Caco-2 (cell line): ENCODE measurements at regions of chr12 and their contacts with region 1.

Region 1: GRCh38 chr12:119500209-119500608 is 93.4 kb upstream of the TMEM233 start:
- DNase-seq: no peak
- H3K4me3 ChIP-seq: no peak overlapping the region
- H3K4me3 Mint-ChIP-seq: no peak overlapping the region
- H3K27ac Mint-ChIP-seq: no peak overlapping the region
- H3K4me1 ChIP-seq: no peaks in the 10 kb centered on the region
- H3K4me1 Mint-ChIP-seq: no peaks in the 10 kb centered on the region
- H3K27me3 ChIP-seq: no peaks in the 10 kb centered on the region
- H3K27me3 Mint-ChIP-seq: peaks cover 18% of the 10 kb centered on the region
- CTCF ChIP-seq: no peak

Region 2: GRCh38 chr12:119415714-119416113 is 84.5 kb before region 1 on chr12:
- CTCF ChIA-PET with region 1: no interaction called
- POLR2A ChIA-PET with region 1: no interaction called
- intact Hi-C with region 1: no loop called
- DNase-seq: no peak
- H3K4me3 ChIP-seq: no peak overlapping the region
- H3K4me3 Mint-ChIP-seq: no peak overlapping the region
- H3K27ac Mint-ChIP-seq: no peak overlapping the region
- H3K4me1 ChIP-seq: peaks cover 5% of the 10 kb centered on the region; the same call in 1 of the 2 replicates
- H3K4me1 Mint-ChIP-seq: peaks cover 10% of the 10 kb centered on the region
- H3K27me3 ChIP-seq: 0 out of 2 replicates have a peak, but pooled peaks cover 1% of the 10 kb centered on the region
- H3K27me3 Mint-ChIP-seq: peaks cover 6% of the 10 kb centered on the region
- CTCF ChIP-seq: no peak

Region 3: DNA sequence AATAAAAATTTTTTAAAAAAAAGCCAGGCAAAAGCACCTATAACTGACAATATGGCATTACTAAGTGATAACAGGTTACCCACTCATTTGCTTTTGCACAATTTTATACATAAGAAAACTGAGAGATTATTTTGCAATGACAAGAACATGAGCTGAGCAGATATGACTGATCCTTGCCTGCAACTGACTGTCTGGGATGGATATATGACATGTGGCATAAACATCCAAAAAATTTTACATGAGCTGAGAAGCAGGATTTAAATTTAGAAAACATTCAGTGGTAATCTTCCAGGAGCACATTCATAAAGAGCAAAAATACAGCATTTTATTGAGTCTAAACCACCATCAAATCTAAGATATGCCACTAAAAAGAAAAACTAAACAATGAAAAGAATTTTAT is 31.9 kb before region 1 on chr12:
- CTCF ChIA-PET with region 1: no interaction called
- POLR2A ChIA-PET with region 1: interaction called, 17 read pairs
- intact Hi-C with region 1: no loop called
- DNase-seq: no peak
- H3K4me3 ChIP-seq: no peak overlapping the region
- H3K4me3 Mint-ChIP-seq: no peak overlapping the region
- H3K27ac Mint-ChIP-seq: no peak overlapping the region
- H3K4me1 ChIP-seq: no peaks in the 10 kb centered on the region
- H3K4me1 Mint-ChIP-seq: no peaks in the 10 kb centered on the region
- H3K27me3 ChIP-seq: no peaks in the 10 kb centered on the region
- H3K27me3 Mint-ChIP-seq: peaks cover 13% of the 10 kb centered on the region
- CTCF ChIP-seq: no peak